ENCODE measurements at regions of chr22 and their contacts with region 1.

Region 1: GRCh38 chr22:46762238-46763050 is at the start of gene TBC1D22A:
- DNase-seq: peak; percentile 93
- ATAC-seq: peak; percentile 72
- H3K4me3 Mint-ChIP-seq: peak within 1 kb of the TSS; percentile 99
- H3K27ac Mint-ChIP-seq: peak within 1 kb of the TSS; percentile 99
- H3K4me1 Mint-ChIP-seq: peaks cover 63% of the 10 kb centered on the region
- H3K27me3 Mint-ChIP-seq: no peaks in the 10 kb centered on the region
- CTCF ChIP-seq: no peak
- total RNA-seq, gene TBC1D22A: 73.0 and 85.9 TPM in 2 replicates

Region 2: DNA sequence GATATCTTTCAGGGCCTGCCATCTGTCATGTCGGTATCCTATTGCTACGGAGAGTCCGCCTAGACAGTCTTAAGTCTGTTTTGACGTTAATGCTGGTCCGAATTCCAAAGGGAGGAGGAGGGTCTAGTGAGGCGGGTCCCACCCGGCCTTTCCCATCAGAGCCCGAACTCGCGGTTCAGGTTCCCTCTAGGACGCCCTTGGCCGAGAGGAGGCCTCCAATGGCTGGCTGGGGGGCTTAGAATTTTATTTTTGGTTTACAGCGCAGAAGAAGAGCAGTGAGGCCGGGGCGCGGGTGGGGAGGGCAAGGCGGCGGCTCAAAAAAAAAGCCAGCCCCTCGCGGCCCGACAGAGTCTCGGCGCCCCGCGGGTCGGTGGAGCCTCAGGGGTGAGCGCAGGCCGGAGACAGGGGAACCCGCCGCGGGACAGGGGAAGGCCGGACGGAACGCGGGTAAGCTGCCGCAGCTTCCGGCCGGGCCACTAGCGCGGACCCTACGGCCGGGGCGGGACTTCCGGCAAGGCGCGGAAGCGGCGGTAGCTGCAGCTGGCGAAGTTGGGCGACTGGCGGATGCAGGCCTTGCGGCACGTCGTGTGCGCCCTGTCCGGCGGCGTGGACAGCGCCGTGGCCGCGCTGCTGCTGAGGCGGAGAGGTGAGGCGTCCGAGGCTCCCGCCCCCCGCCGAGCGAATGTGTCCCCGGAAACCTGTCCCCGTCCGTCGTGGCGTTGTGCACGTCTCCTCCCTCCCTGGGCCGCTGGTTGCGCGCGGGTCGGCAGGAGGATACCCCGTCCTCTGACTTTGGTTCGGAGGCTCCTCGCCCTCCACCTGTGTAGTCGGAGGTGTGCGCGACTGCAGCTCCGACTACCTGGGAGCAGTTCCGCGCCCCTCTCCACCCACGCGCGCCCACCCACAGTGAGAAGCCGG is 427.0 kb before region 1 on chr22 and contains the start of gene TRMU:
- CTCF ChIA-PET with region 1: no interaction called
- POLR2A ChIA-PET with region 1: interaction called, 3 read pairs
- intact Hi-C with region 1: loop called (anchors 1 kb)
- DNase-seq: peak; percentile 82
- ATAC-seq: peak; percentile 92
- H3K4me3 Mint-ChIP-seq: peak within 1 kb of the TSS; percentile 93
- H3K27ac Mint-ChIP-seq: peak within 1 kb of the TSS; percentile 92
- H3K4me1 Mint-ChIP-seq: peaks cover 26% of the 10 kb centered on the region
- H3K27me3 Mint-ChIP-seq: no peaks in the 10 kb centered on the region
- CTCF ChIP-seq: no peak
- total RNA-seq, gene TRMU: 52.2 and 60.0 TPM in 2 replicates

Region 3: DNA sequence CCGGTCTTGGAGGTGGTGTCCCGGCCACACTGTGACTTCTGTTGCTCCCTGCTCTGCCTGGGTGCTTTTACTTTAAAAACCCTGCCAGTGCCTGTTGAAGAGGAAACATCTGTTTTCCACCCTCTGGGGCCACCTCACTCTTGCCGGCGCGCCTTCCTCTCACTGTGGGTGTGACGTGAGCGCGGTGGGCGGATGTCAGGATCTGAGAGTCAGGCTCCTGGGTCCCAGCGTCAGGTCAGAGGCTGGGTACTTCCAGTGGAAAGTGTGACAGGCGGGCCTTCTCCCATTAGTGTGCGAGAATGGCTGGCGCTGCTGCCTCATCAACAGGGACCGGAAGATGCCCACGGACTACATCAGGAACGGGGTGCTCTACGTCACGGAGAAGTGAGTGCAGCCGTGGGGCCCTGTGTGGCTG is 88.1 kb before region 1 on chr22:
- CTCF ChIA-PET with region 1: no interaction called
- POLR2A ChIA-PET with region 1: no interaction called
- intact Hi-C with region 1: loop called (anchors 2 kb)
- DNase-seq: peak; percentile 73
- ATAC-seq: peak; percentile 81
- H3K4me3 Mint-ChIP-seq: peak overlapping the region; percentile 76
- H3K27ac Mint-ChIP-seq: peak overlapping the region; percentile 77
- H3K4me1 Mint-ChIP-seq: peaks cover 34% of the 10 kb centered on the region
- H3K27me3 Mint-ChIP-seq: no peaks in the 10 kb centered on the region
- CTCF ChIP-seq: no peak

Region 4: DNA sequence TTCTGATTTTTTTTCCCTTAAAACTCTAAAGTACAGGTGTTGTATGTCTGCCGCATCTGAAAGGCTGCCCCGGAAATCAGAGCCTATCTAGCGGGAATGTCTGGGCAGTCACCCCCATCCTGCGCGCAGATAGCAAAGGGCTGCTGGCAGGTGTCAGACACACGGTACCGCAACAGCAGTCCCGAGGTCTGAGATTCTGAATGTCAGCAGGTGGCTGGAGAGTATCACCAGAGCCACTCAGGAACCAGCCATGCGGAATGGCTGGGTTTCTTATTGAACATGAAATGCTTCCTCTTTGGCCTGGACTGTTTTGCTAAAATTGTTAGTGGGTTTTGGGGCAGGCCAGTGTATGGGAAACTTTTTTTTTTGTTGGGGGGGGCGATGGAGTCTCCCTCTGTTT is 77.7 kb before region 1 on chr22:
- CTCF ChIA-PET with region 1: interaction called, 4 read pairs
- POLR2A ChIA-PET with region 1: interaction called, 4 read pairs
- intact Hi-C with region 1: loop called (anchors 2 kb)
- DNase-seq: peak; percentile 51
- ATAC-seq: peak; percentile 92
- H3K4me3 Mint-ChIP-seq: peak overlapping the region; percentile 61
- H3K27ac Mint-ChIP-seq: peak overlapping the region; percentile 65
- H3K4me1 Mint-ChIP-seq: peaks cover 35% of the 10 kb centered on the region
- H3K27me3 Mint-ChIP-seq: no peaks in the 10 kb centered on the region
- CTCF ChIP-seq: no peak

Region 5: GRCh38 chr22:46774253-46774979 is 12.0 kb after region 1 on chr22:
- CTCF ChIA-PET with region 1: interaction called, 78 read pairs
- POLR2A ChIA-PET with region 1: interaction called, 273 read pairs
- intact Hi-C with region 1: loop called (anchors 1 kb)
- DNase-seq: peak; percentile 66
- ATAC-seq: peak; percentile 64
- H3K4me3 Mint-ChIP-seq: peak overlapping the region; percentile 72
- H3K27ac Mint-ChIP-seq: peak overlapping the region; percentile 89
- H3K4me1 Mint-ChIP-seq: peaks cover 93% of the 10 kb centered on the region
- H3K27me3 Mint-ChIP-seq: no peaks in the 10 kb centered on the region
- CTCF ChIP-seq: no peak

Region 6: GRCh38 chr22:46791201-46791731 is 28.8 kb after region 1 on chr22:
- CTCF ChIA-PET with region 1: interaction called, 13 read pairs
- POLR2A ChIA-PET with region 1: interaction called, 39 read pairs
- intact Hi-C with region 1: loop called (anchors 1 kb)
- DNase-seq: no peak
- ATAC-seq: peak; percentile 95
- H3K4me3 Mint-ChIP-seq: peak overlapping the region; percentile 78
- H3K27ac Mint-ChIP-seq: peak overlapping the region; percentile 94
- H3K4me1 Mint-ChIP-seq: peaks cover 57% of the 10 kb centered on the region
- H3K27me3 Mint-ChIP-seq: no peaks in the 10 kb centered on the region
- CTCF ChIP-seq: no peak

Region 7: DNA sequence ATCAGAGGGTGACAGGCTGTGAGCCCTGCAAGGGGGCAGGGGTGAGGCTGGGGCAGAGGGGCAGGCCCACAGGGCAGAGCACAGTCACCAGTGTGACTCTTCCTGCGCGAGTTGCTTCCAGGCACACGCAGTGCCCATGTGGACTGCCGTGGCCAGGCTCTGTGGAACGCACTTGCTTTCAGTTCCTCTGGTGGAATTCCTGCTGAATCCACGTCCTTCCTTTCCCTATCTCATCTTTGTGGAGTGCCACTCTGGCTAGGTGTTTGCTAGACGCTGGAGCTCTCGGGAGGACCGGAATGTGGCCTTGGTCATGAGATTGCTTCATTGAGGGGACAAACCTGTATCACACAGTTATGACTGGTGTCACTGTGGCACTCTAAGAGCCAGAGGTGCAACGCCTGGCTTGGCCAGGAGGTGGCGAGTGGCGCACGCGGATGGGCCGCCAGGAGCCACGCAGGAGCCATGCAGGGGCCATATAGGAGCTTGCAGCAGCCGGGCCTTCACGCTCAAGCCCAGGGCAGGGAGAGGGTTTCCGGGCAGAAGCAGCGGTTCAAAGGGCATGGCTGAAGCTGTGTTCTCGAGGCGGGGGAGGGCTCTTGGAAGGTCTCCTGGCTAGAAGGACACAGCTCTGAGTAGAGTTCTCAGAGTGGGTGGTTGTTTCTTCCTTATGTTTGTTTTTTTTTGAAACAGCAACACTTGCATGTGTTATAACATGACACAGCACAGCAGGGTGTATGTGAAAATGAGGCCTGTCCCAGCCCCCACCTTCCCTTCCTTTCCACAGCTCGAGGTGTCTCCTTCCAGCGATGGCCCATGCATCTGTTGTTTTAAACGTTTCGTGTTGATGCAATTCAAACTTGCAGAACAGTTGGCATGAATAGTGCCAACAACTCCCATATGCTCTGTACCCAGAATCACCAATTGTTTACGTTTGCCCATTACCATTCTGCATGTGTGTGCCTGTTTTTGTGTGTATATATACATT is 36.2 kb after region 1 on chr22:
- CTCF ChIA-PET with region 1: interaction called, 266 read pairs
- POLR2A ChIA-PET with region 1: interaction called, 33 read pairs
- intact Hi-C with region 1: loop called (anchors 1 kb)
- DNase-seq: peak; percentile 69
- ATAC-seq: peak; percentile 90
- H3K4me3 Mint-ChIP-seq: no peak overlapping the region
- H3K27ac Mint-ChIP-seq: peak overlapping the region; percentile 18
- H3K4me1 Mint-ChIP-seq: peaks cover 36% of the 10 kb centered on the region
- H3K27me3 Mint-ChIP-seq: no peaks in the 10 kb centered on the region
- CTCF ChIP-seq: peak; percentile 28